PC-3 (cell line): ENCODE measurements at regions of chr11 and their contacts with region 1.

Region 1: DNA sequence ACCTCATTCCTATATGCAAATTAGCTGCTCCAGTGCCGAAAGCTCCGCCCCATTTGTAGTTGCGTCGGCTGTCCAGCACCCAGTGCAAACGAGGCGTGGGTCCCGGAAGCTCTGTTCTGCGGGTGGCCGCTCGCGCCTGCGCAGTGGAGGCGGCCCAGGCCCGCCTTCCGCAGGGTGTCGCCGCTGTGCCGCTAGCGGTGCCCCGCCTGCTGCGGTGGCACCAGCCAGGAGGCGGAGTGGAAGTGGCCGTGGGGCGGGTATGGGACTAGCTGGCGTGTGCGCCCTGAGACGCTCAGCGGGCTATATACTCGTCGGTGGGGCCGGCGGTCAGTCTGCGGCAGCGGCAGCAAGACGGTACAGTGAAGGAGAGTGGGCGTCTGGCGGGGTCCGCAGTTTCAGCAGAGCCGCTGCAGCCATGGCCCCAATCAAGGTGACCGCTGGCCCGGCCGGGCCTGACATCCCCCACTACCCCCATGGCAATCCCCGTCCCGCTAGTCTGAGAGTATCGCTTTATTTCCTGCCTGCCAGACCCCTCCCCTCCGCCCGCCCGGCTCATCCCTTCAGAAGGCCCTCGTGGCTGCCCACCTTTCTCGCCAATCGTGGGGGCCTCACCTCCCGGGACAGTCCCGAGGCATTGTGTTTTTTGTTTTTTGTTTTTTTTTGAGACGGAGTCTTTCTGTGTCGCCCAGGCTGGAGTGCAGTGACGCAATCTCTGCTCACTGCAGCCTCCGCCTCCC is at the start of gene PRDX5:
- DNase-seq: peak; percentile 99
- ATAC-seq: peak; percentile 76
- H3K4me3 ChIP-seq: peak within 1 kb of the TSS; percentile 83
- H3K27ac ChIP-seq: peak within 1 kb of the TSS; percentile 94
- H3K4me1 ChIP-seq: peaks cover 28% of the 10 kb centered on the region
- H3K27me3 ChIP-seq: no peaks in the 10 kb centered on the region
- CTCF ChIP-seq: peak; percentile 60
- total RNA-seq, gene PRDX5: 467 and 585 TPM in 2 replicates

Region 2: DNA sequence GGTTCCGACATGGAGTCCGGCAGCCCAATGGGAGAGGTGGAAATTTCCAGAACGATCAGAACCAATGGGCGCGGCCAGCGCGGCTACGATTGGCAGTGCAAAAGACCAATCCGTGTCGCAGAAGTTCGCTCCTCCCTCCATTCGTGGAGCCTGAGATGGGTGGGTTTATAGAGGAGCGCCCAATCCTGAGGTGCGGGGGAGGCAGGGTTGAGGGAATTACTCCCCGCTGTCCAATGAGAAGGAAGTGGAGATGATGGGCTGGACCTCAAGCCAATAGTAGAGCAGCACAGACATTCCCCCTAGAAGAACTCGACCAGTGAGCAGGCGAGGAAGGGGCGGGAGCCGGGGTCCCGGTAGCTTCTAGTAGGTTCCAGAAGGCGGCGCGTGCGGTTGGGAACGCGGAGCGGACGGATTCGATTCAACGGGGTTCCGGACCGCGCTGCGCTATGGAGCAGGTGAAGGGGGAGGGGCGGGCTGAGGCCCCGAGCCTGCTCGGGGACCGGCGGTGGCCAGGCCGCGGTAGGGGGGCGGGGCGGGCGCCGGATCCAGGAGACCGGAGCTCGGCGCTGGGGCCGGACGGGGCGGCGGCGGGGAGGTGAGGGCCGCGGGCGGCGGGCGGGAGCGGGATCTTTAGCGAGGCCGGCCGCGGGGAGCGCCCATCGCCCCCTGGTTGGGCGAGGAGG is 132.2 kb before region 1 on chr11 and contains the start of gene STIP1:
- CTCF ChIA-PET with region 1: interaction called, 10 read pairs
- POLR2A ChIA-PET with region 1: no interaction called
- intact Hi-C with region 1: no loop called
- DNase-seq: peak; percentile 100
- ATAC-seq: peak; percentile 86
- H3K4me3 ChIP-seq: peak within 1 kb of the TSS; percentile 81
- H3K27ac ChIP-seq: peak within 1 kb of the TSS; percentile 59
- H3K4me1 ChIP-seq: peaks cover 27% of the 10 kb centered on the region
- H3K27me3 ChIP-seq: no peaks in the 10 kb centered on the region
- CTCF ChIP-seq: peak; percentile 39; the same call in 1 of the 2 replicates
- total RNA-seq, gene STIP1: 543 and 557 TPM in 2 replicates

Region 3: DNA sequence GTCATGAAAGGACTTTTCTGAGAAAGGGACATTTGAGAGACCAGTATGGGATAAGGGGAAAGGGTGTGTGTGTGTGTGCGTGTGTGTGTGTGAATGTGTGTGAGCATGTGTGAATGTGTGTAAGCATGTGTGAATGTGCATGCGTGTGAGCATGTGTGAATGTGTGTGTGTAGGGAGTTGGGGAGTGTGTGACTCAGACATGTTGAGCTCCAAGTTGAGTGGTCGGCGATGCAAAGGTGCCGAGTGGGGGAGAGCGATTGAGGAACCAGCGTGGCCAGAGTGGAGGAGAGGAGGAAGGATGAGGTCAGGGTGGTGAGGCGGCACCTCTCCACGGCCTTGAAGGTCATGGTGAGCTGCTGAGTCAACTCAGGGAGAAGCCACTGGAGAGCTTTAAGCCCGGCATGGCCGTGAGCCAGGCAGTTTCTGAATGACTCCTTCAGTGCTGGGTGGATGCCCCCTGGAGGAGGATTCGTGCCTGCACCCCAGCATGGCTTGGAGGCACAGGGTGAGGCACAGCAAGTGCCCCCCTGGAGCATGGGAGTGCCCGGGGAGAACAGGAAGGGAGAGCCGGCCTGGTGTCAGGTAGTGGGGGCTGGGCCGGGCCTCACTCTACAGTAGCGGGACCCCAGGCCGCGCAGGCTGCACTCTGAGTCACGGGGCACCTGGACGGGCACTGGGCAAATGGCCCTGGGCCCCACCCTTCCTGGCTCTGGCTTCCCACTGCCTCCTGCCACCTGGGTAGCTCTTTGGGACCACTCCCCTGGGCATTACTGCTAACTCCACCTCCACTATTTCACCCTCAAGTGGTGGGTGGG is 13.6 kb after region 1 on chr11:
- CTCF ChIA-PET with region 1: interaction called, 78 read pairs
- POLR2A ChIA-PET with region 1: interaction called, 18 read pairs
- intact Hi-C with region 1: loop called (anchors 1 kb)
- DNase-seq: peak; percentile 96
- ATAC-seq: peak; percentile 56
- H3K4me3 ChIP-seq: peak overlapping the region; percentile 22; the same call in 1 of the 2 replicates
- H3K27ac ChIP-seq: peak overlapping the region; percentile 88
- H3K4me1 ChIP-seq: peaks cover 37% of the 10 kb centered on the region
- H3K27me3 ChIP-seq: no peaks in the 10 kb centered on the region
- CTCF ChIP-seq: peak; percentile 85

Region 4: GRCh38 chr11:64341851-64342791 is 24.0 kb after region 1 on chr11:
- CTCF ChIA-PET with region 1: interaction called, 27 read pairs
- POLR2A ChIA-PET with region 1: interaction called, 7 read pairs
- intact Hi-C with region 1: no loop called
- DNase-seq: peak; percentile 96
- ATAC-seq: peak; percentile 96
- H3K4me3 ChIP-seq: peak overlapping the region; percentile 65
- H3K27ac ChIP-seq: 0 out of 2 replicates have a peak overlapping the region, but pooled peaks have one; percentile 12
- H3K4me1 ChIP-seq: peaks cover 8% of the 10 kb centered on the region
- H3K27me3 ChIP-seq: no peaks in the 10 kb centered on the region
- CTCF ChIP-seq: peak; percentile 61

Region 5: DNA sequence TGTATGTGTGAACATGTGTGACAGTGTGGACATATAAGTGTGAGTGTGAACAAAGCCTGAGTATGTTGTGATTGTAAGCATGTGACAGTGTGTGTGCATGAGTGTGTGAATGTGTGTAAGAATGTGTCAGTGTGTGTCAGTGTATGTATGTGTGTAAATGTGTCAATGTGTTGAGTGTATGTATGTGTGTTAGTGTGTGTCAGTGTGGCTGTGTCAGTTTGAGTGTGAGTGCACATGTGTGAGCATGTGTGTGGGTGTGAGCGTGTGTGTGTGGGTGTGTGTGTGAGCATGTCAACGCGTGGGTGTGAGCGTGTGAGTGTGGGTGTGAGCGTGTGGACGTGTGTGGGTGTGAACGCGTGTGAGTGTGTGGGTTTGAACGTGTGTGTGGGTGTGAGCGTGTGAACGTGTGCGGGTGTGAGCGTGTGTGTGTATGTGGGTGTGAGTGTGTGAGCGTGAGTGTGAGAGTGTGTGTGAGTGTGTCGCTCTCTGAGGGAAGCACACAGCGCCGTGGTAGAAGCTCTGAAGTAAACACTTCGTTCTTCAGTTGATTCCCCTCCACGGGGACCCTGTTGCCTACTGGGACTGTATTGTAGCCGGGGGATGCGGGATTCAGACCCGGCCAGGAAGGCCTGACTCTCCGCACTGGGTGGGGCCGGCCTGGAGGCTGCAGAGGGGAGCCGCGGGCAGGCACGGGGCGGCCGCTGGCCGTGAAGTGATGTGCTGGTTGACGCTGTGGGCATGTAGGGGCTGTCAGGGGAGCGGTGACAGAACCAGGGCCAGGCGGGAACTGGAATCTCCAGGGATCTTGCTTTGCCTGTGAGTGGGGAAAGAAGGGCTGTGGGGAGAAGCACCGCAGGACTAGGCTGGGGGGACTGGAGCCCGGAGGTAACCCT is 61.9 kb after region 1 on chr11:
- CTCF ChIA-PET with region 1: interaction called, 8 read pairs
- POLR2A ChIA-PET with region 1: interaction called, 30 read pairs
- intact Hi-C with region 1: no loop called
- DNase-seq: no peak
- ATAC-seq: no peak
- H3K4me3 ChIP-seq: no peak overlapping the region
- H3K27ac ChIP-seq: no peak overlapping the region
- H3K4me1 ChIP-seq: peaks cover 5% of the 10 kb centered on the region; the same call in 1 of the 2 replicates
- H3K27me3 ChIP-seq: no peaks in the 10 kb centered on the region
- CTCF ChIP-seq: no peak

Region 6: DNA sequence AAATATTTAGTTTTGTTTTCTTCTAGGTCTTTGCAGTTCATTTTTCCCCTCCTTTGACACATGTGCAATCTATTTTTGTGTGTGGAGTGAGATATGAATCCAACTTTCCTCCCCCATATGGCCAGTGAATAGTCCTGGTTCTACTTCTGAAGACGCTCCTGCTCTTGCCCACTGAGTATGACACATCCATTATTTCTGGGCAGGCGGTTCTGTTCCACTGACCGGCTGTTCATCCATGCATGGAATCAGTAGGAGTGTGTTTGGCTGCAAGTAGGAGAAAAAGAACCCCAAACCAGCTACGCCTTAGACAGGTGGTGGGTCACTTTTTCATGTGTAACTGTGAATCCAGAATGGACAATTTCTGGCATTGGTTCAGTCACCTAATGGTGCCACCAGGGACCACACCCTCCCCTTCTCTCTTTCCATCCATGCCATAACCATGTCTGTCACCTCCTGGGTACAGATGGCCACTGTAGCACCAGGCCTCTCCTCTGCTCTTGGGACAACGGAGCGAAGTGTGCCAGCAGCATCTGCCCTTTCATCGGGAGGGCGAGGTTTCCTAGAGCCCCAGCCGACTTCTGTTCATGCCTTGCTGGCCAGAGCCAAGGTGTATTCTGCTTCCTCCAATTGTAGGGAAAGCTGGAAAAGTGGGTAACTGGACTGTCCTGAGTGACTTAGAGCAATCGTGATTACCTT is 205.5 kb after region 1 on chr11:
- CTCF ChIA-PET with region 1: no interaction called
- POLR2A ChIA-PET with region 1: no interaction called
- intact Hi-C with region 1: no loop called
- DNase-seq: no peak
- ATAC-seq: no peak
- H3K4me3 ChIP-seq: no peak overlapping the region
- H3K27ac ChIP-seq: no peak overlapping the region
- H3K4me1 ChIP-seq: no peaks in the 10 kb centered on the region
- H3K27me3 ChIP-seq: peaks cover 97% of the 10 kb centered on the region
- CTCF ChIP-seq: no peak

Region 7: DNA sequence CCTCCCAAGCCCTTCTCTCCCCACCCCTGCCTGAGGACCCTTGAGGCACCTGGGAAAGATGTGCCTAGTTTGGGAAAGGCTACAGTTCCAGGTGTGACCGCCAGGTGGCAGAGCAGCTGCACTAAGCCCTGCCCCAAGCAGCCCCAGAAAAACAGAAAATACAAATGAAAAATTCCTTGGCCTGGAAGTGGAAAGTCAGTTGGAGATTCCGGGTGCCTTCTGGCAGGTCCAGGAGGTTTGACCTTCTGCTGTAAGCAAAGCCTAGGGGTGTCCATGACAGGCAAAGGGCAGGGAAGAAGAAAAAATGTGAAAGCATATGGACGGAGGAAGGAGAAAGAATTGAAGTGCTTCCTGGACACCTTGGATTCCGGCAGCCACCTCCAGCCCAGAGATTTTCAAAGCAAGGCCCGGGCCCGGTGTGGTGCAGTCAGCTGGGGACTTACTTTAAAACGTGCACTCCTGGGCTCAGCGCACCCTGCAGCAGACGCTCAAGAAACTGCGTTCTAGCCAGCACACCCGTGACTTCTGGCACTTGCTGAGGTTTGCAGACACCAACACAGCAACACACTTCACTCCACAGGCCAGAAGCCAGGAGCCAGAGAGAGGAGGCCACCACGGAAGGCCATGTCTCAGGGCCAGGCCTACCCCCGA is 235.6 kb after region 1 on chr11:
- CTCF ChIA-PET with region 1: no interaction called
- POLR2A ChIA-PET with region 1: no interaction called
- intact Hi-C with region 1: no loop called
- DNase-seq: peak; percentile 65
- ATAC-seq: peak; percentile 54
- H3K4me3 ChIP-seq: no peak overlapping the region
- H3K27ac ChIP-seq: no peak overlapping the region
- H3K4me1 ChIP-seq: peaks cover 5% of the 10 kb centered on the region; the same call in 1 of the 2 replicates
- H3K27me3 ChIP-seq: peaks cover 6% of the 10 kb centered on the region; the same call in 1 of the 2 replicates
- CTCF ChIP-seq: peak; percentile 98

Region 8: GRCh38 chr11:64652586-64653387 is 334.7 kb after region 1 on chr11:
- CTCF ChIA-PET with region 1: interaction called, 10 read pairs
- POLR2A ChIA-PET with region 1: no interaction called
- intact Hi-C with region 1: no loop called
- DNase-seq: peak; percentile 93
- ATAC-seq: peak; percentile 91
- H3K4me3 ChIP-seq: no peak overlapping the region
- H3K27ac ChIP-seq: no peak overlapping the region
- H3K4me1 ChIP-seq: no peaks in the 10 kb centered on the region
- H3K27me3 ChIP-seq: no peaks in the 10 kb centered on the region
- CTCF ChIP-seq: peak; percentile 94